HEK293T (cell line): ENCODE measurements at regions of chr3 and their contacts with region 1.

Region 1: DNA sequence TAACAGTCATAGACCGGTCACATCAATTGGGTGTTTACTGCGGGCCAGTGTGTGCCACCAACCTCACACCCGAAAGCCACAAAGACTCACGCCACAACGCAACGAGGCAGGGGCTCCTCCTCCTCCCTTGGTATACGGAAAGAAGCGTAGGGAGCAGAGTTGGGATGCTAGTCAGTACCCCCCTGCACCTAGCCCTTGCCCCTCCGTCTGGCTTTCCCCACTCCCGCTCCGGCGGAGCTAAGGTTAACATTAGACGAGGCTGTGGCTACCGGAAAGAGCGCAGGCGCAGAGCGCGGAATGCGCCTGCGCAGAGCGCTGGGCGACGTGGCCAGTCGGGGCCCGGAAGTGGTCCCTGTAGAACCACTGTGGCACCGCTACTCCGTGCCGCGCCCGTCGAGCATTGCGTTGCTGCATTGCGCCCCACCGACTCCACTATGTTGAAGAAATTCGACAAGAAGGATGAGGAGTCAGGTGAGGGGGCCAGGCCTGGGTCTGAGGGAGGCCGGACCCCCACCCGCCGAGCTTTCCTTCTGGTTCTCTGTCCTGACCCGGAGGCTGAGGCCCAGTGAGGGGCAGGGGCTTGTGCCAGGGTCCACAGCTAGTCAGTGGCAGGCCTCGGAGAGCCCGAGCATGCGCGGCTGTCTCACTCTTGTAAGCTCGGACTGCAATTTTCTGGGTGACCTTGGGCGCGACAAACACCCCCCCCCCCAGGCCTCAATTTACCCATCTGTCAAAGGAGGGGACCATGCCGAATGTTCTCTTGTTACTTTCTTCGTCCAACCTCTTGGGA is at the start of gene COPG1:
- DNase-seq: peak; percentile 98

Region 2: GRCh38 chr3:128969993-128970739 is 279.3 kb before region 1 on chr3:
- CTCF ChIA-PET with region 1: interaction called, 22 read pairs
- POLR2A ChIA-PET with region 1: interaction called, 5 read pairs
- DNase-seq: peak; percentile 57

Region 3: GRCh38 chr3:129052675-129053074 is 196.8 kb before region 1 on chr3:
- CTCF ChIA-PET with region 1: interaction called, 26 read pairs
- POLR2A ChIA-PET with region 1: no interaction called
- DNase-seq: no peak

Region 4: GRCh38 chr3:129160891-129161859 is 88.3 kb before region 1 on chr3 and contains the start of gene ISY1:
- CTCF ChIA-PET with region 1: interaction called, 17 read pairs
- POLR2A ChIA-PET with region 1: interaction called, 10 read pairs
- DNase-seq: peak; percentile 92

Region 5: DNA sequence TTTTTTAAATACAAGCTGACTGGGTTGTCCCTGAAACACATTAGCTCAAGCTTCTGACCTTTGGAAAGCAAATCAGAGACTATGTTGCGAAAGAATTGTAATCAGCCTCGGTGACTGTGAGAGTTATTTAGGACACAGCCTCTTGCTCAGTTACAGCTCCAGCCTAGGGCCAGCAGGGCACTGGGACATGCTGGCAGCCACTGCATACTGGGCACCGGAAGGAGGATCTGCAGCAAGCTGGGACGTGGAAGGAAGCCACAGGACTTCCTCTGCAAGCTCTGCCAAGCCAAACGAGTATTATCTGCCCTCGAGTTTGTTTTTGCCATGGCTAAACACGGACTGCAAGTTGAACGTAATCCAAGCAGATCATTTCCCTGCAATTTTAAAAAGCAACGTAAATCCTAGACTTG is 24.5 kb before region 1 on chr3:
- CTCF ChIA-PET with region 1: interaction called, 14 read pairs
- POLR2A ChIA-PET with region 1: interaction called, 4 read pairs
- DNase-seq: peak; percentile 39

Region 6: DNA sequence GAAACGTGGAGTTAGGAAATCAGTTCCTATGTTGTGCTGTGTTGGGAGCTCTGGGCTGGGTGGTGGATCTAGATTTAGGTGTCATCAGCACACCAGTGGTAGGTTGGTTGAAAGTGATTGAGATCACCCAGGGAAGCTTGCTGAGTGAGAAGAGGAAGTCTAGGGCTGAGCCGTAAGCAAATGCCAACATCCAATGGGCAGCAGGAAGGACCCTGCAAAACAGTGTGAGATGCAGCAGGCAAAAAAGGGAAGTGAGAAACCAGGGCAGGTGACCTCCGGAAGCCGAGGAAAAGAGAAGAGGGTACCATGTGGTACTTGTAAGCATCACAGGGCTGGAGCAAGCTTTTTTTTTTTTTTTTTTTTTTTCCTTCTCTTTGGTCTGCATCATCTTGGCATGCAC is 15.9 kb before region 1 on chr3:
- CTCF ChIA-PET with region 1: interaction called, 19 read pairs
- POLR2A ChIA-PET with region 1: interaction called, 4 read pairs
- DNase-seq: no peak

Region 7: GRCh38 chr3:129567176-129567705 is 317.8 kb after region 1 on chr3:
- CTCF ChIA-PET with region 1: no interaction called
- POLR2A ChIA-PET with region 1: no interaction called
- DNase-seq: no peak